ENCODE measurements at regions of chr12 and their contacts with region 1.

Region 1: GRCh38 chr12:9707864-9708808 is 24.8 kb downstream of the CLECL1 start:
- DNase-seq: peak; percentile 28 to 70 (median 53)
- ATAC-seq: peak in 1 of 2 donors; percentile 67
- H3K4me3 ChIP-seq: no peak overlapping the region
- H3K27ac ChIP-seq: no peak overlapping the region
- H3K4me1 ChIP-seq: no peaks in the 10 kb centered on the region
- H3K27me3 ChIP-seq: no peaks in the 10 kb centered on the region

Region 2: DNA sequence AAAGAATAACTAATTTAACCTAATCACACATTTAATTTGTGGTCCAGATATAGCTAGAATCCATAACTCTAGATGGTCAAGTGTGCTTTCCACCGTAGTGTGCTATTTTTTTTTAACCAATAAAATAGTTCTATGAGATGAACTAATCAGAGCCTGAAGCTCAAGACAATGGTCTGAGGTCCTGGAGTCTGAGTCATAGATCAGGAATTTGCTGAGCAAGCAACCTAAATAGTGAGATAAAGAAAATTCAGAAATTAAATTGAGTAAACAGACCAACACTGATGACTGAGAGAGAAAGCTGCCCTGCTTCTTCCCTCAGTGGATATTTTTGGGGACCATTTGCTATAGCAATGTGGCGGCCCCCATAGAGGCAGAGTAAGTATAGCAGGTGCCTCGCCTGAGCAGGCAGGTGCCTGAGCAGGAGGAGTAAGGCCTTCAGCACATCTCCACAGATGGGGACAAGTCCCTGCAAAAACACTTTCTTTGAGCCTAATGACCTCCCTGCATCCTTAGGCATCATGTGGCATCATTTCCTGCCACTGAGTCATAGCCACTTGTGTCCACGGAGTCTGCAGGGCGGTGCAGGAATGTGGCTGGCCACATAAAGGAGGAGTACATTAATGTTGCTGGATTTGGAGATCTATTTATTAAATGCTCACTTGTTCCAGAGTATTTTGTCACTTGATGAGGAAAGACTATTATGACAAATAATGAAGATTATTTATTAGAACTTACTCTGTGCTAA is 1153.5 kb before region 1 on chr12:
- intact Hi-C with region 1: no loop called
- DNase-seq: no peak
- ATAC-seq: no peak
- H3K4me3 ChIP-seq: no peak overlapping the region
- H3K27ac ChIP-seq: no peak overlapping the region
- H3K4me1 ChIP-seq: no peaks in the 10 kb centered on the region
- H3K27me3 ChIP-seq: no peaks in the 10 kb centered on the region

Region 3: GRCh38 chr12:9331218-9331626 is 376.9 kb before region 1 on chr12:
- intact Hi-C with region 1: loop called in 1 of 4 experiments (anchors 10 kb)
- DNase-seq: peak; percentile 45 to 88 (median 87)
- ATAC-seq: peak; percentile 72 to 83
- H3K4me3 ChIP-seq: no peak overlapping the region
- H3K27ac ChIP-seq: no peak overlapping the region
- H3K4me1 ChIP-seq: no peaks in the 10 kb centered on the region
- H3K27me3 ChIP-seq: no peaks in the 10 kb centered on the region

Region 4: GRCh38 chr12:9634177-9634803 is 73.8 kb before region 1 on chr12:
- intact Hi-C with region 1: loop called in 2 of 4 experiments (anchors 5 kb)
- DNase-seq: peak in 1 of 3 donors; percentile 51
- ATAC-seq: no peak
- H3K4me3 ChIP-seq: no peak overlapping the region
- H3K27ac ChIP-seq: no peak overlapping the region
- H3K4me1 ChIP-seq: no peaks in the 10 kb centered on the region
- H3K27me3 ChIP-seq: no peaks in the 10 kb centered on the region

Region 5: DNA sequence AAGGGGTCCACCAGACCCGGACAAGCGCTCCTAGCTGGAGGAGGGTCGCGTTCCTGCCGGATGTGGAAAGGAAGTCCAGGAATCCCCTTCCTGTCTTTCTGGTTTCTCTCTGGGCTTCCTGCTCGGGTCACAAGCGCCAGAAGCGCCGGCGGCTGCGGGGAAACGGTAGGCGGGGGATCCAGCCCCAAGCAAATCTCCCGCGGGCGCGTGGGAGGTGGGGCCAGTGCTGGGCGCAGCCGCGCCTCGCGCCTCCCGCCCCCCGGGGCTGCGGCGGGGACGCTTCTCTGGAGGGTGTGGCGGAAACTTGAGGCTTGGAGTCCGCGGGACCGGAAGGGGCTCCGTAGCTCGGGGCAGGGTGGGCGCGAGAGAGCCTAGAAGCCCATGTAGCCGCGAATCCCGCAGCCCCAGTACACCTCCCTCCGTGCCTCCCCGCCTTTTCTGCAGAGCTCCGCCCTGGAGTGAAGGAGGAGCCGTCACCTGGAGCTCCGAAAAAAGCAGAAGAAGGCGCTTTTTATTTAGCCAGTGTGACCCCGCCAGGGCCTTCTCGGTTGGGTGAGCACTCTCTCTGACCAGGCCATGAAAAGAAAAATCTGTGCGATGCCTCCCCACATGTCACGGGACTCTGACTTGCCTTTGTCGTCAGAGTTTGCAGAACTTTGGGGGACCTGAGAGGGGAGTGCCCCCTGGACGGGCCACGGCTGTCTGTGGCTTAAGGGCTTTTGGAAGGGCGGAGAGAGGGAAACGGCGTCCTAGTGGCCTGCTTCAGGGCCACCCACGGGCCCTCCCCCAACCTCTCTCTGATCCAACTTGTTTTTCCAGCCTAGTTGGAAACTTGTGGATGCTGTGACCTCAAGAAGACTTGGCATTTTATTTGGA is 60.1 kb before region 1 on chr12:
- intact Hi-C with region 1: loop called in 1 of 4 experiments (anchors 10 kb)
- DNase-seq: peak; percentile 86 to 93 (median 93)
- ATAC-seq: peak; percentile 98
- H3K4me3 ChIP-seq: peak overlapping the region; percentile 79
- H3K27ac ChIP-seq: peak overlapping the region; percentile 94
- H3K4me1 ChIP-seq: no peaks in the 10 kb centered on the region
- H3K27me3 ChIP-seq: no peaks in the 10 kb centered on the region

Region 6: DNA sequence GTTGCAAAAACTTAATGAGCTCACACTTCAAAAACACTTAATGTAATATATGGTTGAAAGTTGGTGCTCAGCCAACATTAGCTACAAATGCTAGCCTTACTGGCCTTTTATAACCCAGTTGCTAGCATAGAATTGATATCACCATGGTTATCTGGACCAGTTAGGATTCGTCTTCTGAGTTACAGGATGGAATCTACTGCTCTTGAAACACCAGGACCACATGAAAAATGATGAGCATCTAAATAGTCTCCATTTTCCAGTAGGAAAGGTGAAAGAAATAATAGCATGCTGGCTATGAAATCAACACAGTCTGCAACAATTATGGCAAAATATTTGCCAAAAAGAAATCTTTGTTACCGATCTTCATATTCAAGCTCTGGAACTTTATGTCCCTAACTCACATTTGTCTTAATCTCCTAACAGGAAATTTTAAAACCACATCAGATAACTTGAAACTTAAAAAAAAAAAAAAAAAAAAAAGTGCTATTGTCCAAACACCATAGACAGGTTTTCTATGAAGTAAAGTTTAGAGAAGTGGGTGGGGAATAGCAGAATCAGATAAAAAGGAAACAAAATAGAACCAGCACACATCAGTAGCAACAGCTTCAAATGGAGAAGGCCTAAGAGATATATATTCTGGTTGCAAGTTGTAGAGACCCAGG is 65.2 kb after region 1 on chr12:
- intact Hi-C with region 1: no loop called
- DNase-seq: no peak
- ATAC-seq: no peak
- H3K4me3 ChIP-seq: no peak overlapping the region
- H3K27ac ChIP-seq: no peak overlapping the region
- H3K4me1 ChIP-seq: no peaks in the 10 kb centered on the region
- H3K27me3 ChIP-seq: no peaks in the 10 kb centered on the region

Region 7: DNA sequence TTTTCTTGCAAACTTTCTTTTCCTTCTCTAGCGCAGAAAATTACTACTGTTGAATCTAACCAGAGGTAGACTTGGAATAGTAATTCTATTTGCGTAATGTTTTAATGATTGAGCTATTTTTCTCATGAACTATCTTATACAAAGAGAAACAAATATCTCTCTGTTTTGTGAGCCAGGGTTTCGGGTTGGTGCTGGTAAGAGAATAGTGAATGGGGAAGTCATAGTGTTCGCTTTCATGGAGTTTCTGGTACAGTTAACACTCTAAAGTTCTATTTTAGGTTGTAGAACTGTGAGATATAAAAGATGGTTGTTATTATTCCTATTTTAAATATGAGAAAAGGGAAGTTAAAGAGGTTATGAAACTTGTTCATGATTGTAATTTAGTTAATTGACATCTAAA is 284.2 kb after region 1 on chr12:
- intact Hi-C with region 1: no loop called
- DNase-seq: no peak
- ATAC-seq: no peak
- H3K4me3 ChIP-seq: no peak overlapping the region
- H3K27ac ChIP-seq: no peak overlapping the region
- H3K4me1 ChIP-seq: no peaks in the 10 kb centered on the region
- H3K27me3 ChIP-seq: no peaks in the 10 kb centered on the region

Region 8: DNA sequence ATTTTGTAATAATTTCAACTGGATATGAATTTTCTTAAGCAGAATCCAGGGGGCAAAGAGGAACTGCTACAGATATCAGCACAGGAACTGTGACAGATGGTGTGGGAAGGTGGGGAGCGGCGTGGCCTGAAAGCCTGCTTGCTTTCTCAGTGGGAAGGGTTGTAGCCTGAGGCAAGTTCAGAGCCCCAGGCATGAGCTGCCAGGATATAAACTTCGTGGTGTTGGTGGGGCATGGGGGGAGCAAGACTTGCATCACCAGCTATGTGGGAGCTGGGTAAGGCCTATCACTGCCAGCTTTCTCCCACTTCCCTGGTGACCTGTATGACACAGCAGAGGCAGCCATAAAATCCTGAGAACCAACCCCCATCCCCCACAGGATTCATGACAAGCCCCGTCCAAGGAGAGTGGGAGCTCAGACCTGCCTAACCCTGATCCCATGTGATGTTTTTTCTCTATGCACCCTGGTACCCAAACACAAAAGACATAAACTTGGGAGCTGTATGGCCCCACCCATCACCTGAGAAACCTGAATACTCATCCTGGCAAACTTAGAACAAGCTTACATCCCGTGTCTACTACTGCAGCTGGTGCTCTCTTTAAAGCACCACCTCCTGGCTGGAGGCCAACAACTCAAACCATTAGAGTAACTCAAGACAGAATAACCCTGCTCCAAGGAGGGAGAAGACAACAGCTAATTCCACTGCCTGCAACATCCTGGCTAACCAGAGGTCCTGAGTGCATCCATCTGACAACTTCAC is 374.2 kb after region 1 on chr12:
- intact Hi-C with region 1: no loop called
- DNase-seq: peak in 1 of 3 donors; percentile 30
- ATAC-seq: no peak
- H3K4me3 ChIP-seq: no peak overlapping the region
- H3K27ac ChIP-seq: no peak overlapping the region
- H3K4me1 ChIP-seq: no peaks in the 10 kb centered on the region
- H3K27me3 ChIP-seq: no peaks in the 10 kb centered on the region

Measured in right cardiac atrium (tissue), 5 donors.